ENCODE measurements at regions of chr6 and their contacts with region 1.

Region 1: DNA sequence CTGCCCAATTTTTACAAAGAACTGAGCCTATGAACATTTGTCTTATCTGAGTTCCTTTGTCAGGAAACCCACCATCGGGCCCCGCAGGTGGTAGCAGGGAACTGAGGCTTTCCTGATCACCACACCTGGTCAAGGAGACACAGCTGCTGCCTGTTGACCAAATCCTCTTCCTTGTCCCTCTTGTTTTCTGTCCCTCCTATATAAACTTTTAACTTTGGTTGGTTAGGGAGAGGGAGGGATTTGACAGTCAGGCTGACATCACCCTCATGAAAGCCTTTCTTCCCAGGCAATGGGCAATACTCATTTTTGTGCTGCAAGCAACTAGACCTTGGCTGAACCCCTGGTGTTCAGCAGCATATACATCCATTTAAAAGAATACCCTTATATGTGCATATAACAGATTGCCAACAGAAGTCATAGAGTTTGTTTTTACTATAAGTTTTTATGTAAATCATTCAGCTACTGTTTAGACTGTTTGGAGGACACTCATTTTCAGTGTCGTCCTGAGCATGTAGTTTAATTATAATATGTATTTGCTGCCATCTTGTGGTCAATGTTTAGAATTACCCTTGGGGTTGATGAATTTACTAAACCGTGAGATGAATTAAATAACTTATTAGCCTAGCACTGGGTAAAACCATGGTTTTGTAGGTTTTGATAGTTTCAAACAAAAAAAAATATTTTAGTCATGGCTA is 17.0 kb downstream of the CRISP1 start:
- DNase-seq: no peak
- H3K4me3 ChIP-seq: no peak overlapping the region
- H3K27ac ChIP-seq: no peak overlapping the region
- H3K4me1 ChIP-seq: no peaks in the 10 kb centered on the region
- H3K27me3 ChIP-seq: no peaks in the 10 kb centered on the region
- CTCF ChIP-seq: peak in 2 of 4 experiments; percentile 47 to 63
- EP300 ChIP-seq: no peak
- POLR2A ChIP-seq: no peak

Region 2: GRCh38 chr6:49531774-49532569 is 317.4 kb before region 1 on chr6:
- intact Hi-C with region 1: loop called (anchors 2 kb)
- DNase-seq: no peak
- H3K4me3 ChIP-seq: no peak overlapping the region
- H3K27ac ChIP-seq: no peak overlapping the region
- H3K4me1 ChIP-seq: no peaks in the 10 kb centered on the region
- H3K27me3 ChIP-seq: no peaks in the 10 kb centered on the region
- CTCF ChIP-seq: peak in 3 of 4 experiments; percentile 42 to 63 (median 60)
- EP300 ChIP-seq: no peak
- POLR2A ChIP-seq: no peak

Region 3: DNA sequence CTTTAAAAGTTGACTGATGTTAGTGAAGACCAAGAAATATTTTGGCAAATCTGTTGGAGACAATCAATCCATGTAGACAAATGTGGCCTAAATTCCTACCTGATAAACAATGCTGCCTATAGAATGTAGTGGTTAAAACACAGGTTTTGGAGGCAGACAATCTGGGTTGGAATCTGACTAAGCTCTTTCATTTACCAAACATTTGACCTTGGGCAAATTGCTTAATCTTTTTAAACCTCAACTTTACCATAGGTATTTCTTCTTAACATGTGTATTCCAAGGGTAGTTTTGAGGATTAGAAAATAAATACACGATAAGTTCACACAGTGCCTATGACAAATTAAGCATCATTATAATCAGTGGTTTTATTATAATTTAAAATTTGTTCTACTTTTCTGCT is 224.2 kb before region 1 on chr6:
- intact Hi-C with region 1: loop called (anchors 5 kb)
- DNase-seq: no peak
- H3K4me3 ChIP-seq: no peak overlapping the region
- H3K27ac ChIP-seq: no peak overlapping the region
- H3K4me1 ChIP-seq: no peaks in the 10 kb centered on the region
- H3K27me3 ChIP-seq: no peaks in the 10 kb centered on the region
- CTCF ChIP-seq: no peak
- EP300 ChIP-seq: no peak
- POLR2A ChIP-seq: no peak